ENCODE measurements at regions of chr3 and their contacts with region 1.

Region 1: GRCh38 chr3:46558184-46559043 is 7.7 kb downstream of the LRRC2 start:
- DNase-seq: peak; percentile 77
- H3K4me3 Mint-ChIP-seq: peak overlapping the region; percentile 54
- H3K27ac Mint-ChIP-seq: no peak overlapping the region
- H3K4me1 Mint-ChIP-seq: peaks cover 27% of the 10 kb centered on the region
- H3K27me3 Mint-ChIP-seq: peaks cover 45% of the 10 kb centered on the region

Region 2: DNA sequence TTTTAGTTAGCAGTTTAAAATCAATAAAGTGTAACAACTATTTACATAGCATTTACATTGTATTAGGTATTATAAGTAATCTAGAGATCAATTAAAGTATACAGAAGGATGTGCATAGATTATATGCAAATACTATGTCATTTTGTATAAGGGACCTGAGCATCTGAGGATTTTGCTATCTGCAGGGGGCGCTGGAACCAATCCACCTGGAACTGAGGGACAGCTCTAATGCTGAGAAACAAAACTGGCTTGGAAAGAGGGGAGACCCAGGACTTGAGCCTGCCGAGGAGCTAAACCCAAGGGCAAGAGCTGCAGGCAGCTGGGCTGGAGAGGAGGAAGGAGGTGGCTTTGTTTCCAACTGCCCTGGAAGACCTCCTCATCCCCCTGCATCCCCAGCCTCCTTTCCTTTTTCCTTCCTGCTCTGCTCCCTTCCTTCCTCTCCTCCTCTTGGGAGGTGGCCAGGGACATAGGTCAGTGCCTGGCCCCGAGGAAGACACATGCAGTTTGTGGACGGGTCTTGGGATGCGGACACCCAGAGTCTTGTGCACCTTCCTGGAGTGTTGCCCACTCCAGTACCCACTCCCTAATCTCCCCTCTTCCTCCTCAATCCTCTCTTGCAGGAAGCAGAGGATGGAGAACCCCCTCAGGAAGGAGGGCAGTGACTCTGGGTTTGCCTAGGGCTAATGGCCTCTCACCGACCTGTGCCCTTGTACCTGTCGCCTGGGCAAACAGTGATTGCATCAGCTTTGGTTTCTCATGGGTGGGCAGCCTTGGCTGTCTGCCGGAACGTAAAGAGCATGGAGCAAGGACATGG is 61.5 kb before region 1 on chr3:
- CTCF ChIA-PET with region 1: interaction called, 15 read pairs
- POLR2A ChIA-PET with region 1: interaction called, 3 read pairs
- DNase-seq: peak; percentile 66
- H3K4me3 Mint-ChIP-seq: no peak overlapping the region
- H3K27ac Mint-ChIP-seq: no peak overlapping the region
- H3K4me1 Mint-ChIP-seq: peaks cover 3% of the 10 kb centered on the region
- H3K27me3 Mint-ChIP-seq: peaks cover 3% of the 10 kb centered on the region

Region 3: GRCh38 chr3:46574243-46574646 is 15.8 kb after region 1 on chr3:
- CTCF ChIA-PET with region 1: no interaction called
- POLR2A ChIA-PET with region 1: no interaction called
- DNase-seq: no peak
- H3K4me3 Mint-ChIP-seq: no peak overlapping the region
- H3K27ac Mint-ChIP-seq: no peak overlapping the region
- H3K4me1 Mint-ChIP-seq: peaks cover 2% of the 10 kb centered on the region
- H3K27me3 Mint-ChIP-seq: peaks cover 20% of the 10 kb centered on the region

Measured in activated CD4-positive, alpha-beta memory T cell treated with anti-CD3 and anti-CD28 coated beads, Interleukin-2, amount 10 ng/mL, durations not matched to agents 7 days and 5 days (primary cell).